A673 (cell line): ENCODE measurements at regions of chr7 and their contacts with region 1.

Region 1: DNA sequence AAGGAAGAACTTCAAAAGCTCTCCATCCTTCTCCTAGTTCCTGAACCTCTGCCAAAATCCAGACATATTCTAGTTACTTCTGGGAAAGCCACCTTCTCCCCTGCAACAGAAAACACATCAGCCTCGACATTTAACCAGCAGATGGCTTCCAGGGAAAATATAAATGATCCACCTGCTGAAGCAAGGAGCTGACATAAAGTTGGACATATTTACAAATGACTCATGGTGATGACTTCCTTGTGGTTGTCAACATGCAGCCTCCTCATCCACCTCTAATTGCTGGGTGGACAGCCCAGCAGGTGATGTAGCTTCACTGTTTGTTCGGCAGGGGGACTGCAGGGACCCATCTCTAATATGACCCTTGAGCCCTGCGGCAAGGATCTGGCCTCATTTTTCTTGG is 266.0 kb downstream of the C7orf25 start:
- DNase-seq: no peak
- H3K4me3 ChIP-seq: no peak overlapping the region
- H3K27ac ChIP-seq: no peak overlapping the region
- H3K4me1 ChIP-seq: no peaks in the 10 kb centered on the region
- H3K27me3 ChIP-seq: no peaks in the 10 kb centered on the region
- CTCF ChIP-seq: no peak

Region 2: GRCh38 chr7:42624471-42624870 is 21.4 kb before region 1 on chr7:
- CTCF ChIA-PET with region 1: no interaction called
- POLR2A ChIA-PET with region 1: interaction called, 12 read pairs
- intact Hi-C with region 1: no loop called
- DNase-seq: no peak
- H3K4me3 ChIP-seq: no peak overlapping the region
- H3K27ac ChIP-seq: no peak overlapping the region
- H3K4me1 ChIP-seq: no peaks in the 10 kb centered on the region
- H3K27me3 ChIP-seq: no peaks in the 10 kb centered on the region
- CTCF ChIP-seq: no peak

Region 3: GRCh38 chr7:42720876-42721796 is 75.2 kb after region 1 on chr7:
- CTCF ChIA-PET with region 1: no interaction called
- POLR2A ChIA-PET with region 1: interaction called, 13 read pairs
- intact Hi-C with region 1: no loop called
- DNase-seq: peak; percentile 83
- H3K4me3 ChIP-seq: no peak overlapping the region
- H3K27ac ChIP-seq: no peak overlapping the region
- H3K4me1 ChIP-seq: peaks cover 6% of the 10 kb centered on the region
- H3K27me3 ChIP-seq: no peaks in the 10 kb centered on the region
- CTCF ChIP-seq: no peak